ENCODE measurements at regions of chr20 and their contacts with region 1.

Region 1: DNA sequence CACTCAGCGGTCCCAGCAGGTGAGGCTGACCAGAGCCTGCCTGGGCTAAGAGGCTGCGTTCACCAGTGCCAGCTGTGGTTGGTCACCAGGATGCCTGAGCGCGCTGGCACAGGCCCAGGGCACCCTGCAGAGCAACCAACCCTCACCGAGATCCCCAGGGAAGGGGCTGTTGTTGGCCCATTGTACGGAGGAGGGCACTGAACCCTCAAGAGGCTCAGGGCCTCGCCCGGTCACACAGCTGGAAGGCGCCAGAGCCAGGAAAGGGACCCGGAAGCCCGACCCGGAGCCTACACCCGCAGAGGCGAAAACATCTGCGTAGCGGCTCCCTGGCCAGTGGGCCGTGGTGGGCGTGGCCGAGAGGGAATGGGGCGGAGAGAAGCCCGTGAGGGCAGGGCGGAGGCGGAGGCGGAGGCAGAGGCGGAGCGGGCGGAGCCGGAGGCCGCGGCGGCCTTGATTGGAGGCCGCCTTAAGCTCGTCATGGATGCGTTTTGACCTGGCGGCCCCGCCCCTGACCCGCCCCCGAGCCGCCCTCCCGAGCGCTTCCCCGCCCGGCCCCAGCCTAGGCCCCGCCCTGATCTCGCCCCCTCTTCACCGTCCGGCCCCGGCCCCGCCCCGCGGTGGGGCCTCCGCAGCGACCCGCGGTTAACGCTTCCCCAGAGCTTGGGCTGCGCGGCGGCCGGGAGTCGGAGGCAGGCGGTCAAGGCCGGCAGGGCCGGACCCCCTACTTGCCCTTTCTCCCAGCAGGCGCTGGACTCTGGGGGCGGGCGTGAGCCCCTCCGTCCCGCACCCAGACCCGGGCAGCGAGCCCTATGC is 2.2 kb upstream of the MRGBP start:
- DNase-seq: peak; percentile 100
- H3K4me3 Mint-ChIP-seq: peak overlapping the region; percentile 87
- H3K27ac Mint-ChIP-seq: peak overlapping the region; percentile 95
- H3K4me1 Mint-ChIP-seq: peaks cover 33% of the 10 kb centered on the region
- H3K27me3 Mint-ChIP-seq: no peaks in the 10 kb centered on the region

Region 2: DNA sequence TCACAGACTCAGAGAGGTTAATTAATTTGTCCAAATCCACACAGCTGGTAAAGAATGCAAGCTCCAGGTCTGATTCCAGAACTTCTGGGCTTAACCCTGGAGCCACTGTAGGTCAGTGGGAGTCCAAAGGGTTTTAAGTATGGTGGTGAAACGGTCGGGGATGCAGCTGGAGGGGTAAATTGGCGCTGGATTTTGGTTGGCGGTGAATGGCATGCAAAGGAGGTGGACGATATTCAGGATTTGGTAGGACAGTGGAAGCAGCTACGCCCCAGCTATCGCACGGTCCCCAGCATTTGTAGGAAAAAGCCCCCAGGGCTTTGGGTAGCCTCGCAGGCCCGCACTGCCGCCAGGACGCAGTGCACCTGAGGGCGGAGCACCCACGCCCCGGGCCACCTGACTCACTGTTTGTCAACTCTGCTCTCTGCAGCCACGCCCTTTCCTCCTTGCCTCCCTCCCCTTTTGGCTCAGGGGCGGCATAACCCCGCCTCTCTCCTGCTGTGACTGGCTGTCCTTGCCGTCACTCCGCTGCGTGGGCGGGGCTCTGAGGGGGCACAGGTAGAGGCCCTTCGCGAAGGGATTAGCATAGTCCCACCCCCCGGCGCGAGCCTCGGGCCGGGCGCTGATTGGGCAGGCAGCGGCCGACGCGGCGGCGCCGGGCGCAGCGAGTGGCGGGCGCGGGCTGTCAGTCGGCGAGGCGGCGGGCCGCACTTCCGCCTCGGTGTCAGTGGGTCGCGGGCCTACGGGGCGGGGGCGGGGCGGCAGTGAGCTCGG is 556.1 kb before region 1 on chr20 and contains the start of gene OSBPL2:
- intact Hi-C with region 1: loop called (anchors 5 kb)
- DNase-seq: peak; percentile 100
- H3K4me3 Mint-ChIP-seq: peak within 1 kb of the TSS; percentile 81
- H3K27ac Mint-ChIP-seq: peak within 1 kb of the TSS; percentile 78
- H3K4me1 Mint-ChIP-seq: peaks cover 26% of the 10 kb centered on the region
- H3K27me3 Mint-ChIP-seq: no peaks in the 10 kb centered on the region
- total RNA-seq, gene OSBPL2: 29.0 and 29.2 TPM in 2 replicates

Region 3: GRCh38 chr20:62386383-62387218 is 407.5 kb before region 1 on chr20 and contains the start of gene RPS21:
- intact Hi-C with region 1: loop called (anchors 5 kb)
- DNase-seq: peak; percentile 98
- H3K4me3 Mint-ChIP-seq: peak within 1 kb of the TSS; percentile 98
- H3K27ac Mint-ChIP-seq: peak within 1 kb of the TSS; percentile 94
- H3K4me1 Mint-ChIP-seq: peaks cover 37% of the 10 kb centered on the region
- H3K27me3 Mint-ChIP-seq: no peaks in the 10 kb centered on the region
- total RNA-seq, gene RPS21: 2,091 and 2,109 TPM in 2 replicates

Region 4: GRCh38 chr20:62413896-62414481 is 380.1 kb before region 1 on chr20:
- intact Hi-C with region 1: no loop called
- DNase-seq: no peak
- H3K4me3 Mint-ChIP-seq: no peak overlapping the region
- H3K27ac Mint-ChIP-seq: no peak overlapping the region
- H3K4me1 Mint-ChIP-seq: peaks cover 11% of the 10 kb centered on the region
- H3K27me3 Mint-ChIP-seq: no peaks in the 10 kb centered on the region

Region 5: GRCh38 chr20:62500237-62500864 is 293.8 kb before region 1 on chr20:
- intact Hi-C with region 1: loop called (anchors 1 kb)
- DNase-seq: peak; percentile 94
- H3K4me3 Mint-ChIP-seq: peak overlapping the region; percentile 9
- H3K27ac Mint-ChIP-seq: peak overlapping the region; percentile 98
- H3K4me1 Mint-ChIP-seq: peaks cover 32% of the 10 kb centered on the region
- H3K27me3 Mint-ChIP-seq: no peaks in the 10 kb centered on the region

Region 6: DNA sequence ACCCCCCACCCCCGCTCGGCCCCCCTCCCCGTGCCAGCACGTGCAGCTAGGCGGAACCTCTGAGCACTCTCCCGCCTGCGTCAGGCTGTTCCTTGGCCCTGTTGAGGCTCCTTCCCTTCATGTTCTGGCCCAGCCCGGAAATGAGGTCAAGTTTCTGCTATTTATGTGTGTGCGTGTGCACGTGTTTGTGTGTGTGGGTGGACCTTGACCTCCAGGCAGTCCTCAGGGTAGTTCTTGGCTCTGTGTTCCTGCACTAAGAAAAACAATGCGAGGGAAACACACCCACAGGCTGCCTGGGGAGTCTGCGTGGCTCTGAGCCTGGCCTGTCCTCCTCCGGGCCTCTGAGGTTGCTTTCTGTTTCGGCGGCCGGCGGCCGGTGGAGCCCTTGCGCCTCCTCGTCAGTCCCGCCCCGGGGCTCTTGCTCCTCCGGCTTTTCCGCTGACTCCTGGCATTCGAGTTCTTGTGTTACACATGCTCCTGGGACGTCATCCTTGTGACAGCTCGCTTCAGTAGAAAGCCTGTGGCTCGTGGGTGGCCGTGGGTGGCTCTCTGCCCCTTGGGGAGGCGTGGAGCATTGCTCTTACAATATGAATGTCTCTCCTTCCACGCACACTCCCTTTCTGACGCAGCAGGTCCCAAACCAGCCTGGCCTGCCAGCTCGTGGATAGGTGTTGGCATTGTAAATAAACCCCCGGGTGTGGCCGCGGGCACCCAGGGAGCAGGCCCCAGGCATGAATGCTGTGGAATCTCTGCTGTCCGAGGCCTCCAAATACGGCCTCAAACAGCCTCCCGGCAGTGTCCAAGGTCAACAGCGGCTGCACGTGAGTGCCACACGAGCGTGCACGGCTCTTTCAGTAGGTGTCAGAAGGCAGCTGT is 141.8 kb before region 1 on chr20:
- intact Hi-C with region 1: loop called (anchors 5 kb)
- DNase-seq: peak; percentile 89
- H3K4me3 Mint-ChIP-seq: peak overlapping the region; percentile 82
- H3K27ac Mint-ChIP-seq: peak overlapping the region; percentile 92
- H3K4me1 Mint-ChIP-seq: peaks cover 44% of the 10 kb centered on the region
- H3K27me3 Mint-ChIP-seq: no peaks in the 10 kb centered on the region

Region 7: DNA sequence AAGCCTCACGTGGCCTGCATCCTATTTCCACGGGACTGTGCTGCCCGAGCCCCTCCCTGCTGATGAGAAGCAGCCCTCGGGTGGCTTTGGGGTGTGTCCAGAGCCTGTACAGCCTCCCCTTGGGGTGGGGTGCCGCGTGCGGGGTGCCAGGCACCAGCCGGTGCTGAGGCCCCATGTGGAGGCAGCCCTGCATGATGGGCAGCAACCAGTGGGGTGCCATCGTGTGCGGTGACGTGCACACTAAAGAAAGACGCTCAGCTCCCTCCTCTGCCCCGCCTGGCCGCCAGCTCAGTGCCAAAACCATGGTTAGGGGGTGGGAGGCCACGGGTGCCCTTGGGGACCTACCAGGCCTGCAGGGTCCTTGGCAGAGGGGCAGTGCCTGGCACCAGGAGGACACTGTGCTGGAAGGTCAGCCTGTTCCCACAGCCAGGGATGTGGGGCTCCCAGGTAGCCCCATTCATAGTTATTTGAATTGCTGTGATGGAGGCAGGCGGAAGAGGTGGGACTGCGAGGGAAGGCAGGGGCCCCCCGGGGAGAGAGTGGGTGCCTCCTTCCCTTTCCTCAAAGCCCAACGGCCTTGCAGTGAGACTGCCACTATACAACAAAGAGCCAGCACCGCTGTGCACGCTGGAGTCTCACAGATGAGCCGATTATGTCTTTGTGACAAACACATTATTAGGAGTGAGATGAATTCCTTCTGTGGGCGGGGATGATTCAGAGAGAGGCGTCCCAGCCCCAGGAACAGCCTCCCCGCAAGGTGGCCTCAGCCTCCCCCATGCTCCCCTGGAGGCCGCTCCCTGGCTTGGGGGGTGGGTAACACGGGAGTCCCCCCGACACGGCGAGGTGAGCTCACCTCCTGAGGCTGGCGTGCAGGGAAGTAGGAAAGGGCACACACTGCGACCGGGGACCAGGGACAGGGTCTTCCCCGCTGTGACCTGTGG is 59.0 kb before region 1 on chr20:
- intact Hi-C with region 1: no loop called
- DNase-seq: no peak
- H3K4me3 Mint-ChIP-seq: no peak overlapping the region
- H3K27ac Mint-ChIP-seq: no peak overlapping the region
- H3K4me1 Mint-ChIP-seq: peaks cover 32% of the 10 kb centered on the region
- H3K27me3 Mint-ChIP-seq: peaks cover 28% of the 10 kb centered on the region

Region 8: DNA sequence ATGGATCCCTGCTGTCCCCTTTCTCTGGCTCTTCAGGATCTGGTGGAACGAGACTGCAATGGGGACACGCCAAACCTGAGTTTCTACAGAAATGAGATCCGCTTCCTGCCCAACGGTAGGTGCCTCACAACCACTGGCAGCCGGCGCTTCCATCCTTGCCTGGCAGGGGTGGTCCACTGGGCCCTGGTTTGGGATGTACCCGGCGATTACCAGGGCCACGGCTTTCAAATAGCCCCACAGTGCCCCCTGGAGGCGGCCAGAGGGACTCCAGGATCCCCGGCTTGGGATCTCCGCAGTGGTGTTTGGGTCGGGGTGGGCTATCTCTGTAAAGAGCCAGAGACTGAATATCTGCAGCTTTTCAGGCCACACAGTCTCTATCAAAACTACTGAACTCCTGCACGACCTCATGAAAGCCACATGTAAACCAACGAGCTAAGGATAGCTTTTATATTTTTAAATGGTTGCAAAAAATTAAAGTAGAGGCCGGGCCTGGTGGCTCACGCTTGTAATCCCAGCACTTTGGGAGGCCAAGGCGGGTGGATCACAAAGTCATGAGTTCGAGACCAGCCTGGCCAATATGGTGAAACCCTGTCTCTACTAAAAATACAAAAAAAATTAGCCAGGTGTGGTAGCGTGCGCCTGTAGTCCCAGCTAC is 14.2 kb after region 1 on chr20:
- intact Hi-C with region 1: loop called (anchors 1 kb)
- DNase-seq: peak; percentile 93
- H3K4me3 Mint-ChIP-seq: peak overlapping the region; percentile 45
- H3K27ac Mint-ChIP-seq: peak overlapping the region; percentile 72
- H3K4me1 Mint-ChIP-seq: peaks cover 20% of the 10 kb centered on the region
- H3K27me3 Mint-ChIP-seq: no peaks in the 10 kb centered on the region

Region 9: DNA sequence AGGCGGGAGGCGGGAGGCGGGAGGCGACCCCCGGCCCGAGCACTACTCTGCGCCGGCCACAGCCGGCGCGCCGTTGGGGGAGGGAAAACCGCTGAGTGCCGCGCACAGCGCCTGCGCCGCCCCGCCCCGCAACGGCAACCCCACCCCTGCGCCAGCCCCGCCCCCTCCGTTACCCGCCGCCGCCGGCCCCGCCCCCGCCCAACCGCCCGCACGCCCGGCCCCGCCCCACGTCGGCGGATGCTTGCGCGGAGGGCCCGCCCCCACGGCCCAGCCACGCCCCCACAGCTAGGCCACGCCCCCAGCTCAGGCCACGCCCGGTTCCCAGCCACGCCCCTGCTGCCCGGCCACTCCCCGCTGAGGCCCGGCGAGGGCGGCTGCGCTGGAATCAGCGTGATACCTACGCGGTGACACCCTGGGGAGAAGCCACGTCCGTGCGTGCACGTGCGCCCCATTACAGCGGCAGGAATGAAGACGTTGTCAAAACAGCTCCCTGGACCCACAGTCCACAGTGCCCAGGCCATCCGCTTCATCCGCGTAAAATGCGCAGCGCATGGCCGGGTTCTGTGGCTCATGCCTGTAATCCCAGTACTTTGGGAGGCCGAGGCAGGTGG is 67.7 kb after region 1 on chr20 and contains the start of gene TCFL5:
- intact Hi-C with region 1: no loop called
- DNase-seq: peak; percentile 98
- H3K4me3 Mint-ChIP-seq: peak within 1 kb of the TSS; percentile 64
- H3K27ac Mint-ChIP-seq: peak within 1 kb of the TSS; percentile 42
- H3K4me1 Mint-ChIP-seq: peaks cover 10% of the 10 kb centered on the region
- H3K27me3 Mint-ChIP-seq: peaks cover 24% of the 10 kb centered on the region
- total RNA-seq, gene TCFL5: 5.8 and 6.2 TPM in 2 replicates